Mammary epithelial cell (primary cell): ENCODE measurements at regions of chr12 and their contacts with region 1.

Region 1: GRCh38 chr12:67509666-67510384 is 138.7 kb upstream of the DYRK2 start:
- DNase-seq: no peak
- H3K4me3 ChIP-seq: no peak overlapping the region
- H3K27ac ChIP-seq: no peak overlapping the region
- H3K4me1 ChIP-seq: no peaks in the 10 kb centered on the region
- H3K27me3 ChIP-seq: peaks cover 2% of the 10 kb centered on the region
- CTCF ChIP-seq: no peak

Region 2: DNA sequence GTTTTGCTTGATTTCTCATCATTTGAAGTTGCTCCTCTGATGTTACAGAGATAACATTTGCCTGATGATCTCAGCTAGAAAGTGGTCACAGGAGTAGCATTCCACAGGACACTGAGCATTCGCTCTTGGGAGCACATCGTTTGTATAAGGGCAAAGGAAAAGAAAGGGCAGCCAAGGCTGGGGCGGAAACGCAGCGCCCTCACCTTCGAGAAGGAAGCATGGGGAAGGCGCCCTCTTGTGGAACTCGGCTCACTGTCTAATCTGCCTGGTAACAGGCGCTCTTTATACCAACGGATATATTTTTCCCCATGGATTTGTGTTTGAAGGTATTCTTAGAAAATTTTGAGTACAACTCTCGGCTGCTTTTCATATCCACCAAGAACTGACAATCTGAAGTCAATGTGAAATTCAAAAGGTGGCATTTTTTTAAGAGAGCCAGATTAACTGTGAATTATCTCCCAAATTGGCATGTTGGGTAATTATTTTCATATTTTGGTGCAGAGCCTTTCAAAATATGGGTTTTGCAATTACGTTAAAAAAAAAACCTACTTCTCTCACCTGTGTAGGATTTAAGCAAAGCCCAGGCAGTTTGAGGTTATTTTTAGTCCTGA is 68.0 kb before region 1 on chr12:
- CTCF ChIA-PET with region 1: no interaction called
- dilution Hi-C with region 1: loop called (anchors 10 kb)
- in situ Hi-C with region 1: no loop called
- intact Hi-C with region 1: no loop called
- DNase-seq: peak; percentile 57
- H3K4me3 ChIP-seq: no peak overlapping the region
- H3K27ac ChIP-seq: no peak overlapping the region
- H3K4me1 ChIP-seq: no peaks in the 10 kb centered on the region
- H3K27me3 ChIP-seq: no peaks in the 10 kb centered on the region
- CTCF ChIP-seq: peak; percentile 73 to 89

Region 3: GRCh38 chr12:67648521-67649260 is 138.9 kb after region 1 on chr12 and contains the start of gene DYRK2:
- CTCF ChIA-PET with region 1: no interaction called
- dilution Hi-C with region 1: no loop called
- in situ Hi-C with region 1: no loop called
- intact Hi-C with region 1: no loop called
- DNase-seq: peak; percentile 72
- H3K4me3 ChIP-seq: peak within 1 kb of the TSS; percentile 85 to 92 (median 88)
- H3K27ac ChIP-seq: peak within 1 kb of the TSS; percentile 86
- H3K4me1 ChIP-seq: peaks cover 25% of the 10 kb centered on the region
- H3K27me3 ChIP-seq: no peaks in the 10 kb centered on the region
- CTCF ChIP-seq: peak in 1 of 2 donors; percentile 6
- total RNA-seq, gene DYRK2: 17.8 to 25.8 TPM

Region 4: GRCh38 chr12:68048648-68049297 is 538.9 kb after region 1 on chr12:
- CTCF ChIA-PET with region 1: no interaction called
- dilution Hi-C with region 1: no loop called
- in situ Hi-C with region 1: no loop called
- intact Hi-C with region 1: no loop called
- DNase-seq: no peak
- H3K4me3 ChIP-seq: no peak overlapping the region
- H3K27ac ChIP-seq: no peak overlapping the region
- H3K4me1 ChIP-seq: no peaks in the 10 kb centered on the region
- H3K27me3 ChIP-seq: no peaks in the 10 kb centered on the region
- CTCF ChIP-seq: no peak